WTC11 (cell line): ENCODE measurements at regions of chr9 and their contacts with region 1.

Region 1: DNA sequence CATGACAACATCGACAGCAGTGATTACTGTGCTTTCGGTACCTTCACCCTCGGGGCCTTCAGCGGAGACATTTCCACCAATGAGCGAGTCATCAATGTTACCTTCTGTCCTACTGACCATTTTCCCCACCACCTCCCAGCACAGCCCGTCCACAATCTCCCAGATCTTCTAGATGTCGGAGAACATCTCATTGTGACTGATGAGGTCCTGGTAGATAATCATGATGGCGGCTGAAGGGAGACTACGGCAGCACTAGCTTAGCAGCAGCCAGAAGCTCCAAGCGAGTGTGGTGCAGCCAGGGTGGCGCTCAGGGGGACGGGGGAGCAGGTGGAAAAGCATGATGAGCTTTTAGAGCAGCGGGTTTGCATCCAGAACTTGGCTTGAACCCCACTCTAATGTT is 379.0 kb downstream of the TLR4 start:
- DNase-seq: no peak
- ATAC-seq: no peak
- H3K4me3 Mint-ChIP-seq: no peak overlapping the region
- H3K27ac Mint-ChIP-seq: no peak overlapping the region
- H3K4me1 Mint-ChIP-seq: no peaks in the 10 kb centered on the region
- H3K27me3 Mint-ChIP-seq: no peaks in the 10 kb centered on the region
- CTCF ChIP-seq: no peak

Region 2: GRCh38 chr9:117729375-117729774 is 353.8 kb before region 1 on chr9:
- CTCF ChIA-PET with region 1: no interaction called
- POLR2A ChIA-PET with region 1: interaction called, 15 read pairs
- DNase-seq: no peak
- ATAC-seq: no peak
- H3K4me3 Mint-ChIP-seq: no peak overlapping the region
- H3K27ac Mint-ChIP-seq: no peak overlapping the region
- H3K4me1 Mint-ChIP-seq: peaks cover 3% of the 10 kb centered on the region; the same call in 1 of the 2 replicates
- H3K27me3 Mint-ChIP-seq: no peaks in the 10 kb centered on the region
- CTCF ChIP-seq: no peak